Activated CD4-positive, alpha-beta T cell treated with anti-CD3 and anti-CD28 coated beads, Interleukin-2, amount 10 ng/mL, durations not matched to agents 7 days and 5 days (primary cell): ENCODE measurements at regions of chr14 and their contacts with region 1.

Region 1: GRCh38 chr14:76887196-76887595 is 61.0 kb downstream of the LRRC74A start:
- DNase-seq: no peak
- H3K4me3 Mint-ChIP-seq: no peak overlapping the region
- H3K27ac Mint-ChIP-seq: no peak overlapping the region
- H3K4me1 Mint-ChIP-seq: peaks cover 12% of the 10 kb centered on the region
- H3K27me3 Mint-ChIP-seq: peaks cover 15% of the 10 kb centered on the region

Region 2: GRCh38 chr14:76633571-76633970 is 253.6 kb before region 1 on chr14:
- CTCF ChIA-PET with region 1: no interaction called
- POLR2A ChIA-PET with region 1: no interaction called
- DNase-seq: no peak
- H3K4me3 Mint-ChIP-seq: no peak overlapping the region
- H3K27ac Mint-ChIP-seq: no peak overlapping the region
- H3K4me1 Mint-ChIP-seq: no peaks in the 10 kb centered on the region
- H3K27me3 Mint-ChIP-seq: peaks cover 7% of the 10 kb centered on the region

Region 3: DNA sequence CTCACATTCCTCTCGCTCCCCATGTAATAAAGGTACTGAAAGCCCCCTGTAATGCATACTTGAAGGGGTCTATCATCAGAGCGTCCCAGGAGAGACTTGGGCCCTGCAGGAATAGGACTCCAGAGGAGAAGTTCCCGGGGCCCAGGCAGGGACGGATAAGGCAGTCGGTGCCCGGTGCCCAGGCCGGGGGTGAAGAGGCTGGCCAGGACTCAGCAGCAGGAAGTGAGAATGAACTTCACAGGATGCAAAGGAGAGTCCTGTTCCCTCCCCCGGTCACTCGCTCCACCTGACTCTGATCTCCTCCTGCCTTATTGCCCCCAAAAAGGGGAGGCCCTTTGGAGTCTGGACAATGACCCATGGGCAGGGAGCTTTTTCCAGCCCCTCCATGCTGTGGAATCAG is 20.7 kb before region 1 on chr14:
- CTCF ChIA-PET with region 1: no interaction called
- POLR2A ChIA-PET with region 1: no interaction called
- DNase-seq: no peak
- H3K4me3 Mint-ChIP-seq: no peak overlapping the region
- H3K27ac Mint-ChIP-seq: no peak overlapping the region
- H3K4me1 Mint-ChIP-seq: peaks cover 41% of the 10 kb centered on the region
- H3K27me3 Mint-ChIP-seq: no peaks in the 10 kb centered on the region

Region 4: GRCh38 chr14:76904740-76905438 is 17.7 kb after region 1 on chr14:
- CTCF ChIA-PET with region 1: interaction called, 16 read pairs
- POLR2A ChIA-PET with region 1: no interaction called
- DNase-seq: peak; percentile 65
- H3K4me3 Mint-ChIP-seq: no peak overlapping the region
- H3K27ac Mint-ChIP-seq: peak overlapping the region; percentile 25
- H3K4me1 Mint-ChIP-seq: peaks cover 44% of the 10 kb centered on the region
- H3K27me3 Mint-ChIP-seq: peaks cover 6% of the 10 kb centered on the region

Region 5: GRCh38 chr14:77240336-77240911 is 353.2 kb after region 1 on chr14:
- CTCF ChIA-PET with region 1: no interaction called
- POLR2A ChIA-PET with region 1: no interaction called
- DNase-seq: no peak
- H3K4me3 Mint-ChIP-seq: no peak overlapping the region
- H3K27ac Mint-ChIP-seq: no peak overlapping the region
- H3K4me1 Mint-ChIP-seq: no peaks in the 10 kb centered on the region
- H3K27me3 Mint-ChIP-seq: no peaks in the 10 kb centered on the region